Ascending aorta (tissue), 2 donors: ENCODE measurements at regions of chr17 and their contacts with region 1.

Region 1: GRCh38 chr17:40068917-40069750 is 6.4 kb downstream of the THRA start:
- DNase-seq: peak; percentile 76 to 92
- H3K4me3 ChIP-seq: peak overlapping the region; percentile 39 to 51
- H3K27ac ChIP-seq: peak overlapping the region; percentile 91
- H3K4me1 ChIP-seq: peaks cover 48 to 84% of the 10 kb centered on the region in 2 donors
- H3K27me3 ChIP-seq: no peaks in the 10 kb centered on the region
- CTCF ChIP-seq: peak in 1 of 3 experiments; percentile 5

Region 2: DNA sequence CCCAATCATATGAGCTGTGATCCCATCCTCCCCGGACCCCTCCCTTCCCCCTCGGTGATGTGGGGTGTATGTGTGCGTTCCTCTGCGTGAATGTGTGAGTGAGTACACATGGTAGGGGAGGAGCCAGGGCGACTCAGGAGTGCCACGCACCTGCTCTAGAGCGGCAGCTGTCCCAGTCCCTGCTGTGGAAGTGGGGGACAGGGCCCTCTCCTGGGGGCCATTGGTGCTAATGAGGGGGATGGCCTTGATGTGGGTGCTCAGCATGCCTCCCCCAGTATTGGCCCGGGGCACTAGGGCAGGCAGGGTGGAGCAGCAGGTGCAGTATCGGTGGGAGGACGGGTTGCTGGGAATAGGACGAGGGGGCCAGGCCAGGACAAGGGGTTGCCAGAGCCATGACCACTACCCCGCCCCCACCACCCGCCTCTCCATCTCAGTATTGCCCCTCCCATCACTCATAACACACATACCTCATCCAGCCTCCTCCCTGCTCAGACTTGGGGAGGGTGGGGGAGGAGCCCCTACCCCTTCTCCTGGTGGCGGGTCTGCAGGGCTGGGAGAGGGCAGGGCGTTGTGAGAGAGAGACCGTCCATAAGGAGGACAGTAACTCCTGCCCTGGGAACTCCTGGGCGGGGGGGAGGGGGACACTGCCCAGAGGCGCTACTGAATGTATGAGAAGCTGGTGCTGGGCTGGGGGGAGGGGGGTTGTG is 22.7 kb after region 1 on chr17:
- intact Hi-C with region 1: loop called (anchors 2 kb)
- DNase-seq: no peak
- H3K4me3 ChIP-seq: no peak overlapping the region
- H3K27ac ChIP-seq: peak overlapping the region; percentile 91 to 99
- H3K4me1 ChIP-seq: peaks cover 25 to 63% of the 10 kb centered on the region in 2 donors
- H3K27me3 ChIP-seq: no peaks in the 10 kb centered on the region
- CTCF ChIP-seq: no peak

Region 3: GRCh38 chr17:40098846-40099618 is 29.9 kb after region 1 on chr17:
- intact Hi-C with region 1: loop called (anchors 2 kb)
- DNase-seq: peak; percentile 99 to 100
- H3K4me3 ChIP-seq: peak overlapping the region; percentile 89 to 94
- H3K27ac ChIP-seq: peak overlapping the region; percentile 91 to 99
- H3K4me1 ChIP-seq: peaks cover 35 to 70% of the 10 kb centered on the region in 2 donors
- H3K27me3 ChIP-seq: no peaks in the 10 kb centered on the region
- CTCF ChIP-seq: no peak